Heart right ventricle (tissue), 16 donors: ENCODE measurements at regions of chr11 and their contacts with region 1.

Region 1: GRCh38 chr11:18321980-18322711 is at the starts of genes GTF2H1 and HPS5:
- DNase-seq: peak; percentile 92 to 97
- ATAC-seq: peak; percentile 98 to 100 (median 99)
- H3K4me3 ChIP-seq: peak within 1 kb of the TSS; percentile 70 to 93 (median 84)
- H3K27ac ChIP-seq: peak within 1 kb of the TSS; percentile 93 to 99 (median 96)
- H3K4me1 ChIP-seq: peaks cover 0 to 59% (median 45%) of the 10 kb centered on the region in 9 donors
- H3K27me3 ChIP-seq: no peaks in the 10 kb centered on the region
- CTCF ChIP-seq: no peak
- total RNA-seq, gene GTF2H1: 19.6 to 27.9 (median 25.2) TPM
- total RNA-seq, gene HPS5: 9.9 to 14.9 (median 12.5) TPM

Region 2: GRCh38 chr11:18383388-18384156 is 61.4 kb after region 1 on chr11:
- intact Hi-C with region 1: loop called in 2 of 10 experiments (anchors 5 kb)
- DNase-seq: peak; percentile 56 to 74
- ATAC-seq: peak; percentile 87 to 96 (median 90)
- H3K4me3 ChIP-seq: peak overlapping the region in 1 of 10 donors; percentile 4
- H3K27ac ChIP-seq: peak overlapping the region; percentile 89 to 98 (median 94)
- H3K4me1 ChIP-seq: peaks cover 13 to 32% (median 26%) of the 10 kb centered on the region in 9 donors
- H3K27me3 ChIP-seq: no peaks in the 10 kb centered on the region
- CTCF ChIP-seq: no peak